ENCODE measurements at regions of chr5 and their contacts with region 1.

Region 1: DNA sequence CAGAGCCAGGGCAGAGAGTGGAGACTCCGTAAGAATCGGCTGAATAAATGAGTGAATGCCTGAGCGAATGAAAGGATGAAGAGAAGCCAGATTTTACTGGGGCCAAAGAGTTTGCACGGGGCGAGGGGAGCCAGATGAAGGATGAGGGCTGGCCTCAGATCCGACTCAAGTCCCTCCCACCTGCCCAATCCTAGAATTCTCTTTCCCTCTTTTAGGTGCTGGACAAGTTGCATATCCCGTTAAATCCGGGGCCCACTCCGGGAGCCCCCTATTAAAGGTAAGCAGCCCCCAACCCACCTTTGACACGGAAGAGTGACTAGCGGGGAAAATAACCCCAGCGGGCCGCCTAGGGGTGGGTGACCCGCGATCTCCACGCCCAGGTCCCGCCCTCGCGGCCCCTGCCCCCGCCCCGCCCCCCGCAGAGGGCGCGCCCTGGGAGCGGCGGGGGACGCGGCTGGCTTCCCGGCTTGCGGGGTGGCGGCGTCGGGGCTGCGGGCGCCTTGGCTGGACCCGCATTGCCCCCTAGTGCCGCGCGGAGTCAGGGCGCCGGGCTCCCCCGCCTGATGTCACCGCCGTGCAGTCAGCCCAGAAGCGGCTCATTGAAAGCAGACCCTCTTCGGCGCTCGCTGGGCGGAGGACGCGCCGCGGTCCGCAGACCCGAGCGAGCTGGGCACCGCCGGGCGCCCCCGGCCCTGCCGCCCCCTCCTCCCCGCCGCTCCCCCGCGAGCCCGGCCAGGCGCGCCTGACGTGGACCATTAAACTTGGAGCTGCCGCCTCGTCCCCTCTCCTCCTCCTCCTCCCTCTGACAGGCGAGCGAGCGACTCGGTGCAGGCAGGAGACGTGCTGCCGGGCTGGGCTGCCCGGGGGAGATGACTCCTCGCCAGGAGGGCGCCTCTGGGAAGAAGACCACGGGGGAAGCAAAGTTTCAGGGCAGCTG is at the start of gene ADRA1B:
- DNase-seq: peak; percentile 13
- H3K4me3 Mint-ChIP-seq: no peak within 1 kb of the TSS
- H3K27ac Mint-ChIP-seq: no peak within 1 kb of the TSS
- H3K4me1 Mint-ChIP-seq: peaks cover 2% of the 10 kb centered on the region
- H3K27me3 Mint-ChIP-seq: peaks cover 61% of the 10 kb centered on the region
- total RNA-seq, gene ADRA1B: not detected in 2 replicates

Region 2: GRCh38 chr5:159286420-159287035 is 629.6 kb before region 1 on chr5:
- intact Hi-C with region 1: loop called (anchors 5 kb)
- DNase-seq: no peak
- H3K4me3 Mint-ChIP-seq: no peak overlapping the region
- H3K27ac Mint-ChIP-seq: no peak overlapping the region
- H3K4me1 Mint-ChIP-seq: no peaks in the 10 kb centered on the region
- H3K27me3 Mint-ChIP-seq: peaks cover 5% of the 10 kb centered on the region

Region 3: GRCh38 chr5:159331093-159331973 is 584.8 kb before region 1 on chr5:
- intact Hi-C with region 1: loop called (anchors 5 kb)
- DNase-seq: peak; percentile 64
- H3K4me3 Mint-ChIP-seq: peak overlapping the region; percentile 54
- H3K27ac Mint-ChIP-seq: no peak overlapping the region
- H3K4me1 Mint-ChIP-seq: peaks cover 29% of the 10 kb centered on the region
- H3K27me3 Mint-ChIP-seq: peaks cover 41% of the 10 kb centered on the region

Region 4: DNA sequence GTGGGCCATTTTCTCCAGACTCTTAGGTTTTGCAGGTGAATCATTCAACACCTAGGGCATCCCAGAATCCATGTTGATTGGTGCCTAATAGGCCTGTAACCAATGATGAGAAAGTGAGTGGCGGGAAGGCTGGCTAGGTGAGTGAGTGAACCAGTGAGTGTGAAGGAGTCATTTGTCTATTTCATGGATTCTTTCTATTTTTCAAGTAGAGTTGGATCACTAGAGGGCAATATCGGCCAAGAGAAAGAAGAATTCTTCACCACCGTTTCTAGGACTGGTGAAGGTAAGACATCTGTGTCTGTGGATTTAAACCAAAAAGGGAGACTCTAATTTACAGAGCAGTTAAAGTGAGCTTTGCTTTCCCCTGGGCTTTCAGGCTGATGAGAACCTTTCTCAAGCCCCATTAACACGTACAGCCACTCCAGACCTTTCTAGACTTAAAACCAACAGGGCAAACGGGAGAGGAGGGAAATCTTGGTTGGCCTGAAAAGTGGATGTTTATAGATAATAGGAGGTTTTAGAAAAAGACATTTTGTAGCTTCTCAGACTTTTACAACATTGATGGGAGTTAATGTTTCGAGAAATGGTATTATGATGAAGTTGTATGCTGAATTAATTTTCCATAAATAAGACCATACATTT is 471.6 kb before region 1 on chr5:
- intact Hi-C with region 1: loop called (anchors 10 kb)
- DNase-seq: no peak
- H3K4me3 Mint-ChIP-seq: no peak overlapping the region
- H3K27ac Mint-ChIP-seq: no peak overlapping the region
- H3K4me1 Mint-ChIP-seq: no peaks in the 10 kb centered on the region
- H3K27me3 Mint-ChIP-seq: peaks cover 54% of the 10 kb centered on the region

Region 5: DNA sequence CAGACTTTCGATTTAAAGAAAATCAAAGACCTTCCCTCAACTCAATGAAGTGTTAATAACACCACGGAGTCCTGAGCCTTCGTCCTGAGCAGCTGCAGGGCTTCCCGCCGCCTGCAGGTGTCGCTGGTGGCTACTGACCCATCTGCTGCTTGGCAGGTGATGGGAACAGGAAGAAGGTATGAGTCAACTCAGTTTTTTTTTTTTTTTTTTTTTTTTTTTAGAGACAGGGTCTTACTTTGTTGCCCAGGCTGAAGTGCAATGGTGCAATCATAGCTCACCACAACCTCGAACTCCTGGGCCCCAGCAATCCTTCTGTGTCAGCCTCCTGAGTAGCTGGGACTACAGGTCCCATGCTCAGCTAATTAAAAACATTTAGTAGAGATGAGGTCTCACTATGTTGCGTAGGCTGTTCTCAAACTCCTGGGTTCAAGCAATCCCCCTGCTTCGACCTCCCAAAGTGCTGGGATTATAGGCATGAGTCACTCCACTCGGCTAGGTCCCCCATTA is 400.2 kb before region 1 on chr5:
- intact Hi-C with region 1: loop called (anchors 5 kb)
- DNase-seq: peak; percentile 50
- H3K4me3 Mint-ChIP-seq: no peak overlapping the region
- H3K27ac Mint-ChIP-seq: no peak overlapping the region
- H3K4me1 Mint-ChIP-seq: peaks cover 7% of the 10 kb centered on the region
- H3K27me3 Mint-ChIP-seq: peaks cover 14% of the 10 kb centered on the region